ENCODE measurements at regions of chr9 and their contacts with region 1.

Region 1: GRCh38 chr9:98536542-98537173 is 172.1 kb downstream of the GABBR2 start:
- DNase-seq: no peak
- H3K4me3 Mint-ChIP-seq: no peak overlapping the region
- H3K27ac Mint-ChIP-seq: no peak overlapping the region
- H3K4me1 Mint-ChIP-seq: no peaks in the 10 kb centered on the region
- H3K27me3 Mint-ChIP-seq: peaks cover 2% of the 10 kb centered on the region

Region 2: DNA sequence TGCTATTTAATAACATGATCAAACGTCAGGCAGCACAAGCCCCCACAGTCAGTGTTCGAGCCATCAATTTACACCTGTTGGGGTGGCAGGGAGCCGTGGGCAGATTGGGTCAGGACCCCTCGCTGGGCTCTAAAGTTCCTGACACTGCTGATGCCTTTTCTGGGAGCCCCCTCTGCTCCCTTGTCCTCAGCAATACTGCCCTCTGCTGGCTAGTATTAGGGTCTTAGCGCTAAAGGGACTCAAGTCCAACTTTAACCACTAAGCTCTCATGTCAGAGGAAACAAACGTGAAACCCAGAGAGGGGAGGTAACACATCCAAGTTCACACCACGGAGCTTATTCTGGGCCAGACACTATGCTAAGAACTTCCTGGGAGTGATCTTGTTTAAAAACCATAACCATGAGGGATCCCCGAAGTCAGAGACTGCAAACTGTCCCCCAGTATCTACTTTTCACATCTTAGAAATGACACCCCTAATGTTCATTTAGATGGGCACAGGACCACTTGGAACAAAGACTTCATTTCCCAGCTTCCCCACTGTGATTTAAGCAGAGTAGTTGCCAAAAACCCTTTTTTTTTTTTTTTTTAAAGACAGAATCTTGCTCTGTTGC is 239.3 kb after region 1 on chr9:
- intact Hi-C with region 1: loop called (anchors 10 kb)
- DNase-seq: no peak
- H3K4me3 Mint-ChIP-seq: no peak overlapping the region
- H3K27ac Mint-ChIP-seq: no peak overlapping the region
- H3K4me1 Mint-ChIP-seq: no peaks in the 10 kb centered on the region
- H3K27me3 Mint-ChIP-seq: no peaks in the 10 kb centered on the region

Region 3: DNA sequence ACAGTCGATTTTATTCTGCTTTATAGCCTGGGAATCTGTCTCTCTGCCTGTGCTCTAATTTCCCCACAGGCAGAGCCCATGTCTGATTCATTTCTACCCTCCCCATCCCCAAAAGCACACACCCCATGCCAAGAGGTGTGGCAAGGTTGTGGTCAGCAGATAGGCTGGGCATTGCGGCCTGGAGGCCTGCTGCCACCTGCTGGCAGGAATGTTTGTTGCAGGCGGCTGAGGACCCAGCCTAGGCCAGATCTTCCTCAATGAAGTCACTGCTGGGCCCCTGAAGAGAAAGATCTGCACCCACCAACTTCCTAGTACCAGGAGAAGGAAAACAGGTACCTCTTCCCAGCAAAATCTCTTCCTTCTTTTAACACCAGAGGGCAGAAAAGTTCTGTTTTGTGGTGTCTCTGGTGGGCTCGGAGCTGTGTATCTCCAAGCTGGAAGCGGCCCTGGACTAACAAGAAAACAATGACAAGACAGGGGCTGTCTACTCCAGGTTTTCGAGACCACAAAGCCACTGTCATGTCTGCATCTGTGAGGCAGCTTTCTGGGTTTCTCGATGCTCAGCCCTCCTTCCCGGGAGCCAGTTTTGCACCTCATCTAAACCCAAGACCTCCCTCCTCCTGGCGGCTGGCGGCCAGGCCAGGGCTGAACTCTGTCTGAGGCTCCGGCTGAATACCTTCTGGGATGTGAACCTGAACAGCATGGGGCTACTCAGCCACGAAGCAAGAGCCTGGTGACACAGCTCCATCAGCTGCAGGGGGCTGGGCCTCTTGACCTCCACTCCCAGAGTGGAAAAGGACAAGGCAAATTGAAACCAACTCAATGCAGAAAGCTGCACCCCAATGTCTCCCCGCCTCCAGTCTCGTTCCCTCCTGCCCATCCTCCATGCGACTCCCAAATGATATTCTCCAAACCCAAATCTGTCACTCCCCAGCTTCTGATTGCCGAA is 254.8 kb after region 1 on chr9:
- intact Hi-C with region 1: loop called (anchors 5 kb)
- DNase-seq: peak; percentile 44
- H3K4me3 Mint-ChIP-seq: no peak overlapping the region
- H3K27ac Mint-ChIP-seq: no peak overlapping the region
- H3K4me1 Mint-ChIP-seq: peaks cover 14% of the 10 kb centered on the region
- H3K27me3 Mint-ChIP-seq: peaks cover 9% of the 10 kb centered on the region